Endothelial cell of umbilical vein (primary cell): ENCODE measurements at regions of chr20 and their contacts with region 1.

Region 1: DNA sequence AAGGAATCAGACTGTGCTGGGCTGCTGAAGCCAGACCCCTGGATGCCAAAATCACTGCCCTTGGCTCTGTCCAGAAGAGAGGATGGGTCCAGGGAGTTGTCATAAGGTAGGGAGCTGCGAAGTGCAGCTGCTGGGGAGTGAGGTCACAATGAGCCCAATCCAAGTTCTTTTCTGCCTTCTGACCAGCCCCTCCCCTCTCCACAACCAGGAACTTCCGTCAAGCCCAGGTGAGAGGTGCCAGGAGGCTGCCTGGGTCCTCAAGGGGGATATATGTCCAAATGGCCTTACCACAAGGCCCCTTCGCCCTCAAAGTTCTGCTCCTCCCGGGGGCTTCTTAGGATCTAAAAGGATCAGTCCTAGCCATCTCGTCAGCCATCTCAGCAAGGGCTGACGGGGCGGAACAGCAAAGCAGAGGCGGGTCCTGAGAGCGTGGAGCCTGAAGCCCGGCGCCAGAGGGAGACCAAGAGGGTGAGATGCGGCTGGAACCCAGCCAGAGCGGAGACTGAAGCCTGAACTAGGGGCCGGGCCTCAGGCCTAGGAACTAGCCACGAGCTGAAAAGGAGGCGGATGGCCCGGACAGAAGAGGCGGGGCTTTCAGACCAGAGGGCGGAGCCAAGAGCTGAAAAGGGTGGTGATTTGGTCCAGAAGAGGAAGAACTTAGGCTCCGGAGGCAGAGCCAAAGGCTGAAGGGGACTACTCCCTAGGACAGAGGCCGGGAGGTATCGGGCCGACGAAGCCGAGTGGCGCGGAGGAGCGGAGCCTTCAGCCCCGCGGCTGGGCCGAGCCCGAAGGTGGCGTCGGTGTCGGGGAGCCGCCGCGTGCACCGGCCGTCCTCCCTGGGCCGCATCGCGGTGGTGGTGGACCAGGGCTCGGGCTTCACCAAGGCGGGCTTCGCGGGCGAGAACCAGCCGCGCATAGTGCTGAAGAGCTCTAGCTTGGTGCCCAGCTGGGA is at the start of gene ACTL10:
- DNase-seq: peak; percentile 98
- H3K4me3 ChIP-seq: peak within 1 kb of the TSS; percentile 3 to 33 (median 17)
- H3K27ac ChIP-seq: peak within 1 kb of the TSS; percentile 21
- H3K4me1 ChIP-seq: peaks cover 23% of the 10 kb centered on the region
- H3K27me3 ChIP-seq: no peaks in the 10 kb centered on the region
- CTCF ChIP-seq: peak in 1 of 2 donors; percentile 53
- POLR2A ChIP-seq: peak; percentile 87
- total RNA-seq, gene ACTL10: 0.62 and 1.4 TPM in 2 replicates

Region 2: GRCh38 chr20:33401184-33401920 is 265.2 kb before region 1 on chr20 and contains the start of gene CDK5RAP1:
- CTCF ChIA-PET with region 1: interaction called, 11 read pairs
- POLR2A ChIA-PET with region 1: no interaction called
- dilution Hi-C with region 1: no loop called
- intact Hi-C with region 1: no loop called
- DNase-seq: peak; percentile 90
- H3K4me3 ChIP-seq: peak within 1 kb of the TSS; percentile 44 to 81 (median 76)
- H3K27ac ChIP-seq: peak within 1 kb of the TSS; percentile 2
- H3K4me1 ChIP-seq: peaks cover 10% of the 10 kb centered on the region
- H3K27me3 ChIP-seq: no peaks in the 10 kb centered on the region
- CTCF ChIP-seq: no peak
- POLR2A ChIP-seq: peak; percentile 78
- total RNA-seq, gene CDK5RAP1: 31.1 and 36.5 TPM in 2 replicates

Region 3: GRCh38 chr20:33450867-33451266 is 215.7 kb before region 1 on chr20:
- CTCF ChIA-PET with region 1: interaction called, 8 read pairs
- POLR2A ChIA-PET with region 1: no interaction called
- dilution Hi-C with region 1: no loop called
- intact Hi-C with region 1: loop called (anchors 2 kb)
- DNase-seq: no peak
- H3K4me3 ChIP-seq: no peak overlapping the region
- H3K27ac ChIP-seq: no peak overlapping the region
- H3K4me1 ChIP-seq: no peaks in the 10 kb centered on the region
- H3K27me3 ChIP-seq: peaks cover 0 to 2% of the 10 kb centered on the region in 2 experiments
- CTCF ChIP-seq: no peak
- POLR2A ChIP-seq: no peak

Region 4: DNA sequence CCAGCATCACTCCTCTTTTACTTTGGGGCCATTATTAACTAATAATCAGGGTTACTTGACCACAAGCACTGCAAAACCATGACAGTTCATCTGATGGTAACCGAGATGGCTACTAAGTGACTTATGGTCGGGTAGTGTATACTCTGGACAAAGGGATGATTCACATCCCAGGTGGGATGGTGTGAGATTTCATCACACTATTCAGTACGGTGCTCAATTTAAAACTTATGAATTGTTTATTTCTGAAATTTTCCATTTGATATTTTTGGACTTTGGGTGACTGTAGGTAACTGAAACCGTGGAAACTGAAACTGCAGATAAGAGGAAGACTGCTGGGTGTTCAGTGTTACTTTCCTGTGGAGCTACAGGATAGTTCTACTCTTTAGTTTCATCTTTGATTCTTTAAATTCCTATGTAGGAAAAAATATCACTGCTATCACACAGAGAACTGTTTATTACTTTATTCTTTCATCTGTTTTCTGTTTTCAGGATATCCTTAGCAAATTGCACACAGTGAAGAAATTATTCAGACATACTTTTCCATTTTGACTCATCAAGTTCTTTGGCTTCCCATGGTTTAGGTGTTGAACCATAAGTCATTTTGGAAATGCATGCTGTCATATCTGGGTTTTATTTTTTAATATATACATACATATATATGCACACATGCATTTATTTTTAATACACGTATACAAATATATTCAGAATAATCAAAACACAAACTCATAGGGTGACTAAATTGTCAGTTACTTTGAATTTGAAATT is 63.6 kb before region 1 on chr20:
- CTCF ChIA-PET with region 1: no interaction called
- POLR2A ChIA-PET with region 1: no interaction called
- dilution Hi-C with region 1: no loop called
- intact Hi-C with region 1: no loop called
- DNase-seq: no peak
- H3K4me3 ChIP-seq: no peak overlapping the region
- H3K27ac ChIP-seq: no peak overlapping the region
- H3K4me1 ChIP-seq: no peaks in the 10 kb centered on the region
- H3K27me3 ChIP-seq: no peaks in the 10 kb centered on the region
- CTCF ChIP-seq: no peak
- POLR2A ChIP-seq: no peak

Region 5: DNA sequence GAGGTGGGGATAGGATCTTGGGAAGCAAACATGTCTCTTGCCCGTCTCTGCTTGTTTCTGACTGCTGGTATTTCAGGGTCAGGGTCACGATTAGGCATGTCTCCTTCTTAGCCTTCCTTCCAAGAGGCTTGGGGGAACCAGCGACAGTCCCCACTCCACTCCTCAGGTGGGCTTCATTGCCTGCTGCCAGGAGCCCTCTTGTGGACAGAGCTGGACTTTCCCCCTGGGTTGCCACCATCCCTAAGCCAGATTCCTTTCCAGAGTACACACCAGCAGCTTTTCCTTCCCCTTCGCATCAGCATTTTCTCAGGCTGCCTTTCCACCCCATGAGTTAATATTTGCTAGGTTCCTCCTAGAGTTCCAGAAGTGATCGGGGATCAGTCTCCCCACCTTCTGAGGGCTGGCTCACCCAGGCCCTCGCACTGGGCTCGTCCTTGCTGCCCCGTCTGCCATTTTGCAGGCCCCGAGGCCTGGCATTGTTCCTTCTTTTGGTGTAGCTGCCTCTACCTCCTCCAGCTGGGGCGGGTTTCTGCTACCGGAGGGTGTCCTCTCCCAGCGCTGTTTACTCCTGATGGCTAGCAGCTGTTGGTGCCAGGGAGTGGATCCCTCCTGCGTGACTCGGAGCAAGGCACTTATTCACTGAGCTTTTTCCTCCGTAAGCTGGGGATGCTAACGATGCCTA is 13.2 kb before region 1 on chr20:
- CTCF ChIA-PET with region 1: interaction called, 23 read pairs
- POLR2A ChIA-PET with region 1: interaction called, 4 read pairs
- dilution Hi-C with region 1: no loop called
- intact Hi-C with region 1: no loop called
- DNase-seq: peak; percentile 67
- H3K4me3 ChIP-seq: no peak overlapping the region
- H3K27ac ChIP-seq: no peak overlapping the region
- H3K4me1 ChIP-seq: no peaks in the 10 kb centered on the region
- H3K27me3 ChIP-seq: no peaks in the 10 kb centered on the region
- CTCF ChIP-seq: peak; percentile 79 to 94
- POLR2A ChIP-seq: peak; percentile 41

Region 6: GRCh38 chr20:33686100-33686983 is 19.8 kb after region 1 on chr20 and contains the start of gene E2F1:
- CTCF ChIA-PET with region 1: interaction called, 13 read pairs
- POLR2A ChIA-PET with region 1: no interaction called
- dilution Hi-C with region 1: no loop called
- intact Hi-C with region 1: loop called (anchors 2 kb)
- DNase-seq: peak; percentile 95
- H3K4me3 ChIP-seq: peak within 1 kb of the TSS; percentile 4 to 50 (median 11)
- H3K27ac ChIP-seq: peak within 1 kb of the TSS; percentile 15
- H3K4me1 ChIP-seq: peaks cover 36% of the 10 kb centered on the region
- H3K27me3 ChIP-seq: no peaks in the 10 kb centered on the region
- CTCF ChIP-seq: peak in 1 of 2 donors; percentile 30
- POLR2A ChIP-seq: no peak
- total RNA-seq, gene E2F1: 27.0 and 29.6 TPM in 2 replicates

Region 7: GRCh38 chr20:33893314-33893713 is 226.7 kb after region 1 on chr20:
- CTCF ChIA-PET with region 1: no interaction called
- POLR2A ChIA-PET with region 1: no interaction called
- dilution Hi-C with region 1: no loop called
- intact Hi-C with region 1: no loop called
- DNase-seq: no peak
- H3K4me3 ChIP-seq: no peak overlapping the region
- H3K27ac ChIP-seq: no peak overlapping the region
- H3K4me1 ChIP-seq: no peaks in the 10 kb centered on the region
- H3K27me3 ChIP-seq: peaks cover 27 to 29% of the 10 kb centered on the region in 2 experiments
- CTCF ChIP-seq: no peak
- POLR2A ChIP-seq: no peak

Region 8: DNA sequence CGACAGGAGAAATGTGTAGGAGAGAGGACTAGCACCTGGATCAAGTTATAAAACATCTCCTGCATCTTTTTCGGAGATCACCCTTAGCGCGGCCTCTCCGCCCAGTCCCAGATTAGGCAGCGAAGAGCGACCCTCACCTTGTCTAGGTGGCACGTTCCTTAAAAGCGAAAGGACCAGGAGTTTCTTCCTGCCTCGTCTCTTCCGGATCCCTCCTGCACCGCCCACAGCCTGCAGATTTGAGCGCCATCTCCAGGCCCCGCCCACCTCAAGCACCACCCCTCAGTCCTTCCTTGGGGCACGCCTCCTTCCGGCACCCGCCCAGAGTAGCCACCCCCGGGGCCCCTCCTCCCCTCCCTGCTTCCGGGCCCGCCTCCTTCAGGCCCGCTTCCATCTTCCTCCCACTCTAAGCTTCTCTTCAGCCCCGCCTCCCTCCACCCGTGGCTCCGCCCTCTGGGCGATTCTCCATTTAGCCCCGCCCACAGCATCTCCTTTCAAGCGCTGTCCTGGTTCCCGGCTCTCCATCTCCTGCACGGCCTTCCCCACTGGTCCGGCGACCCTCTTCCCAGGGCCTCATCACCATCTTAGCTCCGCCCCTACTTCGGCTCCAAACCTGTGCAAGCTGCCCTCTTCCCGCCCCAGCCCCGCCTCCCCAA is 326.5 kb after region 1 on chr20:
- CTCF ChIA-PET with region 1: no interaction called
- POLR2A ChIA-PET with region 1: no interaction called
- dilution Hi-C with region 1: no loop called
- intact Hi-C with region 1: loop called (anchors 10 kb)
- DNase-seq: peak; percentile 100
- H3K4me3 ChIP-seq: peak overlapping the region; percentile 92 to 99 (median 96)
- H3K27ac ChIP-seq: peak overlapping the region; percentile 86
- H3K4me1 ChIP-seq: peaks cover 19% of the 10 kb centered on the region
- H3K27me3 ChIP-seq: no peaks in the 10 kb centered on the region
- CTCF ChIP-seq: no peak
- POLR2A ChIP-seq: peak; percentile 96

Region 9: GRCh38 chr20:34045294-34045693 is 378.7 kb after region 1 on chr20:
- CTCF ChIA-PET with region 1: no interaction called
- POLR2A ChIA-PET with region 1: no interaction called
- dilution Hi-C with region 1: no loop called
- intact Hi-C with region 1: no loop called
- DNase-seq: peak; percentile 17
- H3K4me3 ChIP-seq: no peak overlapping the region
- H3K27ac ChIP-seq: no peak overlapping the region
- H3K4me1 ChIP-seq: peaks cover 4% of the 10 kb centered on the region
- H3K27me3 ChIP-seq: no peaks in the 10 kb centered on the region
- CTCF ChIP-seq: no peak
- POLR2A ChIP-seq: no peak

Region 10: GRCh38 chr20:34129518-34130162 is 463.1 kb after region 1 on chr20:
- CTCF ChIA-PET with region 1: interaction called, 4 read pairs
- POLR2A ChIA-PET with region 1: no interaction called
- dilution Hi-C with region 1: no loop called
- intact Hi-C with region 1: loop called (anchors 1 kb)
- DNase-seq: peak; percentile 78
- H3K4me3 ChIP-seq: no peak overlapping the region
- H3K27ac ChIP-seq: no peak overlapping the region
- H3K4me1 ChIP-seq: peaks cover 3% of the 10 kb centered on the region
- H3K27me3 ChIP-seq: no peaks in the 10 kb centered on the region
- CTCF ChIP-seq: peak; percentile 61 to 76
- POLR2A ChIP-seq: no peak